ENCODE measurements at regions of chr19 and their contacts with region 1.

Region 1: GRCh38 chr19:8321060-8321985 is at the starts of genes NDUFA7 and RPS28:
- DNase-seq: peak; percentile 97
- ATAC-seq: peak; percentile 95
- H3K4me3 Mint-ChIP-seq: peak within 1 kb of the TSS; percentile 98
- H3K27ac Mint-ChIP-seq: peak within 1 kb of the TSS; percentile 96
- H3K4me1 Mint-ChIP-seq: peaks cover 37% of the 10 kb centered on the region
- H3K27me3 Mint-ChIP-seq: no peaks in the 10 kb centered on the region
- CTCF ChIP-seq: no peak
- total RNA-seq, gene NDUFA7: 31.1 and 35.8 TPM in 2 replicates
- total RNA-seq, gene RPS28: 3,149 and 3,168 TPM in 2 replicates

Region 2: GRCh38 chr19:8261347-8262310 is 59.7 kb before region 1 on chr19:
- CTCF ChIA-PET with region 1: no interaction called
- POLR2A ChIA-PET with region 1: interaction called, 11 read pairs
- intact Hi-C with region 1: loop called (anchors 10 kb)
- DNase-seq: no peak
- ATAC-seq: no peak
- H3K4me3 Mint-ChIP-seq: no peak overlapping the region
- H3K27ac Mint-ChIP-seq: peak overlapping the region; percentile 24
- H3K4me1 Mint-ChIP-seq: no peaks in the 10 kb centered on the region
- H3K27me3 Mint-ChIP-seq: no peaks in the 10 kb centered on the region
- CTCF ChIP-seq: no peak

Region 3: GRCh38 chr19:8307965-8308866 is 13.1 kb before region 1 on chr19 and contains the start of gene CD320:
- CTCF ChIA-PET with region 1: no interaction called
- POLR2A ChIA-PET with region 1: interaction called, 11 read pairs
- intact Hi-C with region 1: loop called (anchors 1 kb)
- DNase-seq: peak; percentile 88
- ATAC-seq: peak; percentile 90
- H3K4me3 Mint-ChIP-seq: peak within 1 kb of the TSS; percentile 89
- H3K27ac Mint-ChIP-seq: peak within 1 kb of the TSS; percentile 71
- H3K4me1 Mint-ChIP-seq: peaks cover 31% of the 10 kb centered on the region
- H3K27me3 Mint-ChIP-seq: no peaks in the 10 kb centered on the region
- CTCF ChIP-seq: no peak
- total RNA-seq, gene CD320: 23.7 and 24.6 TPM in 2 replicates

Region 4: DNA sequence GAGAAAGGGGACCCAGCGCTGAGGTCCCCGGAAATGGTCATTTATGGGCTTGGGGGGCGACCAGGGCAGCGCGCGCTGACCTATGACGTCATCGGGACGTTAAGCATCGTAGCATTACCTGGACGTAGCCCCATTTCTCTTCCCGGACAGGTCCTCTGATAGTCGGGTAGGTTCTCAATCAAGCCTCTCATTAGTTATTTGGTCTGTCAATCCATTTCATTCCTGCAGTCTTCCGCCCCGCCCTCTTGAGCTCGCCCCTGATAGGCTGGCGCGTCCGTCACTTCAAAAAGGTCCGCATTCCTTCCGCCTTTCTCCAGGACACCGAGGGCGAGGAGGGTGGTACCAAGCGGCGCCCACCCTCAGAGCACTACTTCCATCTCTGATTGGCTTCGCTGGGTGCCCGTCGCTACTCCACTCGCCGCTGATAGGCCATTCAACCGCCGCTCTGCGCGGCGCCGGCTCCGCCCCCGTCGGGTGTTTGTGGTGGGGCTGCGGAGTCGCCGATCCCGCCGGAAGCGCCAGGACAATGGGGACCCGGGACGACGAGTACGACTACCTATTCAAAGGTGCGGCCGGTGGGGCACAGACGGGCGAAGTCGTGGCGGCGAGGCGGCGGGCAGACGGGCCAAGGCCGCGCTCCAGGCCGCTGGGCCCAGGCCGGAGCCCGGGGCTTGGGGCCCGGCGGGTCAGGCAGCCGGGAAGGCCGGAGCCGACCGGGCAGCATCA is 68.7 kb after region 1 on chr19 and contains the start of gene RAB11B:
- CTCF ChIA-PET with region 1: no interaction called
- POLR2A ChIA-PET with region 1: interaction called, 13 read pairs
- intact Hi-C with region 1: loop called (anchors 1 kb)
- DNase-seq: peak; percentile 92
- ATAC-seq: peak; percentile 88
- H3K4me3 Mint-ChIP-seq: peak within 1 kb of the TSS; percentile 95
- H3K27ac Mint-ChIP-seq: peak within 1 kb of the TSS; percentile 94
- H3K4me1 Mint-ChIP-seq: peaks cover 27% of the 10 kb centered on the region
- H3K27me3 Mint-ChIP-seq: no peaks in the 10 kb centered on the region
- CTCF ChIP-seq: no peak
- total RNA-seq, gene RAB11B: 92.1 and 100 TPM in 2 replicates

Region 5: GRCh38 chr19:8412783-8413628 is 91.7 kb after region 1 on chr19 and contains the start of gene MARCHF2:
- CTCF ChIA-PET with region 1: no interaction called
- POLR2A ChIA-PET with region 1: interaction called, 10 read pairs
- intact Hi-C with region 1: no loop called
- DNase-seq: peak; percentile 96
- ATAC-seq: peak; percentile 99
- H3K4me3 Mint-ChIP-seq: peak within 1 kb of the TSS; percentile 70
- H3K27ac Mint-ChIP-seq: no peak within 1 kb of the TSS
- H3K4me1 Mint-ChIP-seq: peaks cover 9% of the 10 kb centered on the region
- H3K27me3 Mint-ChIP-seq: no peaks in the 10 kb centered on the region
- CTCF ChIP-seq: no peak
- total RNA-seq, gene MARCHF2: 24.8 and 25.6 TPM in 2 replicates

Region 6: DNA sequence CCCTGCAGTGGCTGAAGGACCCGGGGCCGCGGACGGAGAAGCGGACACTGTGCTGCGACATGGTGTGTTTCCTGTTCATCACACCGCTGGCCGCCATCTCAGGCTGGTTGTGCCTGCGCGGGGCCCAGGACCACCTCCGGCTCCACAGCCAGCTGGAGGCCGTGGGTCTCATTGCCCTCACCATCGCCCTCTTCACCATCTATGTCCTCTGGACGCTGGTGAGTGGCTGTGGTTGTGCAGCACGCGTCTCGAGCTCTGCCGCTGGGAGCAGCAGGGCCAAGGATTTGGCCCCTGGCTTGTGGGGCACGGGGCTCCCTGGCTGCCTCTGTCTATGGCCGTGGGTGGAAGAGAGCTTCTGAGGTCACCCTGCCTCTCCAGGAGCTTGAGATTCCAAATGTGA is 109.3 kb after region 1 on chr19:
- CTCF ChIA-PET with region 1: no interaction called
- POLR2A ChIA-PET with region 1: interaction called, 12 read pairs
- intact Hi-C with region 1: no loop called
- DNase-seq: no peak
- ATAC-seq: no peak
- H3K4me3 Mint-ChIP-seq: no peak overlapping the region
- H3K27ac Mint-ChIP-seq: no peak overlapping the region
- H3K4me1 Mint-ChIP-seq: no peaks in the 10 kb centered on the region
- H3K27me3 Mint-ChIP-seq: no peaks in the 10 kb centered on the region
- CTCF ChIP-seq: no peak

Region 7: GRCh38 chr19:8444645-8445487 is 123.5 kb after region 1 on chr19 and contains the start of gene HNRNPM:
- CTCF ChIA-PET with region 1: no interaction called
- POLR2A ChIA-PET with region 1: interaction called, 5 read pairs
- intact Hi-C with region 1: loop called (anchors 1 kb)
- DNase-seq: peak; percentile 100
- ATAC-seq: peak; percentile 94
- H3K4me3 Mint-ChIP-seq: peak within 1 kb of the TSS; percentile 98
- H3K27ac Mint-ChIP-seq: peak within 1 kb of the TSS; percentile 96
- H3K4me1 Mint-ChIP-seq: peaks cover 42% of the 10 kb centered on the region
- H3K27me3 Mint-ChIP-seq: no peaks in the 10 kb centered on the region
- CTCF ChIP-seq: no peak
- total RNA-seq, gene HNRNPM: 282 and 287 TPM in 2 replicates